HEK293 (cell line): ENCODE measurements at regions of chr1 and their contacts with region 1.

Region 1: DNA sequence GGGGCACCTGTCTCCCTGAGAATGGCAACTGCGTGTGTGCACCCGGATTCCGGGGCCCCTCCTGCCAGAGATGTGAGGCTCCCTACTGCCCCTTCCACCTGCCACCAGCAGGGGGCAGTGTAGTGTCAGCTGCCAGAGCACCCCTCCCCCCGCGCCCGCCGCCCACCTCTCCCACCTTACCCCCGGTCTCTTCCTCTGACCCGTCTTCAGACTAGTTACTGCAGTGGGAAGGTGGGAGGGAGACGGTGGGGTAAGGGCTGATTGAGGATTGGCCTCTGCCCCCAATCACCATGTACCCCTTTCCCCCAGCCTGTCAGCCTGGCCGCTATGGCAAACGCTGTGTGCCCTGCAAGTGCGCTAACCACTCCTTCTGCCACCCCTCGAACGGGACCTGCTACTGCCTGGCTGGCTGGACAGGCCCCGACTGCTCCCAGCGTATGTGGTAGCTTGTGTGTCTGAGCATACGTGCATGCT is 10.1 kb upstream of the LRRC71 start:
- H3K4me3 ChIP-seq: no peak overlapping the region
- H3K27ac ChIP-seq: no peak overlapping the region
- H3K4me1 ChIP-seq: no peaks in the 10 kb centered on the region
- CTCF ChIP-seq: peak; percentile 81

Region 2: DNA sequence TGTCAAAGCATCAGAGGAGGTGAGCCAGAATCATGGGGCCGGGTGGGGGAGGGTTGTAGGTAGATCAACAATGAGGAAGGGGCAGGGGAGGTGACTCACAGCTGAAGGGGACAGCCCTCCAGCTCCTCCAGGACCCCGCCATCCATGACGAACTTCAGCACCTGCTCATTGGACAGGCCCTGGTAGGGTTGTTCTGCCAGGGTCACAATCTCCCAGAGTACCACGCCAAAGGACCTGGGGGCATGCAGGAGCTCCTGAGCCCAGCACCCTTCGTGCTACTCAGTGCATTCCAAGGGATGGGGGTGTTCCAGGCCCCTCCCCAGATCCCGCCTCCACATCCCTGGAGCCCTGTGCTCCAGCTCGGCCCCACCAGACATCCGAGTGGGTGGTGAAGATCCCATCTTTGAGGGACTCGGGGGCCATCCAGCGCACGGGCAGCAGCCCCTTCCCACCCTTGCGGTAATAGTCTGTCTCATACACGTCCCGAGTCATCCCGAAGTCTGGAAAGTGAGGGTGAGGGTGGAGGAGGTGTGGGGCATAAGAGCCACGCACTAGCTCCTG is 69.0 kb before region 1 on chr1:
- CTCF ChIA-PET with region 1: no interaction called
- POLR2A ChIA-PET with region 1: no interaction called
- H3K4me3 ChIP-seq: no peak overlapping the region
- H3K27ac ChIP-seq: no peak overlapping the region
- H3K4me1 ChIP-seq: no peaks in the 10 kb centered on the region
- CTCF ChIP-seq: no peak

Region 3: DNA sequence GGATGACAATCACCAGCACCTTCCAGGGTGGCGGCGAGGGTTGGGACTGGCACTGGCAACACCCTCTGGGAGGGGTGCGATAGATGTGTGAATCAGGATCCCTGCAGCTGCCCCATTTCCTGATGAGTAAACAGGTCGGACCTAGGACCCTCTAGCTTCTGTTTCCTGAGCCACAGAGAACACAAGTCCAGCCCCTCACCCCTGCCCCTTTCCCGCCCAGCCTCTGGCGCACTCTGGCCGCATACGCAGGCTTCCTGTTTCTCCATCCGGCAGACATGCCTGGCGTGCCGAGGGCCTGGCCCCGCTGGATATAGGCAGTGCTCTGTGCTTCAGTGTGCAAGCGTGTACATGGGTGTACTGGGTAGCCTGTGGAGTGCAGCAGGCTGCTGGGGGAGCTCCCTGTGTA is 12.2 kb before region 1 on chr1:
- CTCF ChIA-PET with region 1: interaction called, 20 read pairs
- POLR2A ChIA-PET with region 1: no interaction called
- H3K4me3 ChIP-seq: no peak overlapping the region
- H3K27ac ChIP-seq: no peak overlapping the region
- H3K4me1 ChIP-seq: no peaks in the 10 kb centered on the region
- CTCF ChIP-seq: no peak

Region 4: DNA sequence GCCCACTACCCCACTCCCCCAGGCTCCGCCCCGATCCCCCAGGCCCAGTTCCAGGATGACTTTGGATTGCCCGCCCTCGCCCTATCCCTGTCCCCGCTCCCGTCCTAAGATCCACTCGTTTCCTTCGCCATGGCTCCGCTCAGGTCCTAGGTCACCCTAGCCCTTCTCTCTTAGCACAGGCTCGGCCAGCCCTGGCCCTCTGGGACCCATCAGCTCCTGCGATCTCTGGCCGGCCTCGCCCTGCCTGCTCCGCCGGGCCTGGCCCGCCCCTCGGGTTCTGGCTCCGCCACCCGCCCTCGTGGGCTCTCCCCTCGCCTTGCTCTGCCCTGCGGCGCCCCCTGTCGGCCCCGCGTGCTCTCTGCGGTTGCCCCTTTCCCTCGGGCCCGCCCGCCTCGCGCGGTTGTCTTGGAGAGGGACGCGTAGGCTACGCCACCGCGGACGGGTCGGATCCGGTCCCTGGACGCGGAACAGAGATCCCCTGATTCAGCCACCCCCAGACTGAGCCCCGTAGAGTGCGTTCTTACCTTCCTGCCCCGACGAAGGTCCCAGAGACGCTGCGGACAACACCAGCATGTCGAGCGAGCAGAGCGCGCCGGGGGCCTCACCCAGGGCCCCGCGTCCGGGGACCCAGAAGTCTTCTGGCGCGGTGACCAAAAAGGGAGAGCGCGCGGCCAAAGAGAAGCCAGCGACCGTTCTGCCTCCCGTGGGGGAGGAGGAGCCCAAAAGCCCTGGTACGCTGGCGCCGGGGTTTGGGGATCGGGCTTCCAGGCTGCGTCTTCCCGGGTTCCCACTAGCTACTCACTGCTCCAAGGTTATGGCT is 10.1 kb after region 1 on chr1 and contains the start of gene LRRC71:
- CTCF ChIA-PET with region 1: interaction called, 49 read pairs
- POLR2A ChIA-PET with region 1: no interaction called
- H3K4me3 ChIP-seq: no peak within 1 kb of the TSS
- H3K27ac ChIP-seq: no peak within 1 kb of the TSS
- H3K4me1 ChIP-seq: no peaks in the 10 kb centered on the region
- CTCF ChIP-seq: peak; percentile 88